ENCODE measurements at regions of chr9 and their contacts with region 1.

Region 1: DNA sequence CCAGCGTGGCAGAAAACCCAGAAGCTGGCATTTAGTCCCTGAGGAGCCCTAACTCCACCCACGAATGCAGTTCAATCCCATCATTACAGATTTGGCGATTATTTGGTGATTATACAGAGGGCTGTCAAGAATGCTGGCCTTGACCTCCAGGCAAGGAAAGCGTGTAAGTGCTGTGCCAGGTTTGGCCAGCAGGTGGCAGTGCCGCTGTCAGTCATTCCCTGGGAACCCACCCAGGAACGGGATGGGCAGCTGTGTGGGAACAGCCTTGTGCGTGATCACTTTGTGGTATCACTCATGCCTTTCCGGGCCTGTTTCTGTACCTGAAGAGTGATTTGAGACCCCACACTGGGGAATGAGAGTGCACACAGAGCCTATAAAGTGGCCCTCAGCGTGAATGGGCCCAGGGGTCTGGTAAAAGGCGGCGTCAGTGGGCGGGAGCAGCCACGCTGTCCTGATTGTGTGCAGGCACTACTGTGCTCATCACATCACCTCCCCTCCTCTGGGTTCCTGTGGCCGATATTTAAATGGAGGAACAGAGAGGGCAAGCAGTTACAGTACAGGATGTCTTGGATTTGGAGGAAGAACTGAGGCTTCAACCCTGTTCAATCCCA is 215.6 kb downstream of the ROR2 start:
- DNase-seq: peak; percentile 45
- H3K4me3 Mint-ChIP-seq: no peak overlapping the region
- H3K27ac Mint-ChIP-seq: no peak overlapping the region
- H3K4me1 Mint-ChIP-seq: no peaks in the 10 kb centered on the region
- H3K27me3 Mint-ChIP-seq: no peaks in the 10 kb centered on the region
- CTCF ChIP-seq: peak; percentile 92

Region 2: GRCh38 chr9:91882627-91883026 is 148.2 kb after region 1 on chr9:
- CTCF ChIA-PET with region 1: no interaction called
- POLR2A ChIA-PET with region 1: no interaction called
- intact Hi-C with region 1: loop called (anchors 2 kb)
- DNase-seq: peak; percentile 43
- H3K4me3 Mint-ChIP-seq: no peak overlapping the region
- H3K27ac Mint-ChIP-seq: no peak overlapping the region
- H3K4me1 Mint-ChIP-seq: no peaks in the 10 kb centered on the region
- H3K27me3 Mint-ChIP-seq: peaks cover 9% of the 10 kb centered on the region
- CTCF ChIP-seq: no peak